ENCODE measurements at regions of chr16 and their contacts with region 1.

Region 1: DNA sequence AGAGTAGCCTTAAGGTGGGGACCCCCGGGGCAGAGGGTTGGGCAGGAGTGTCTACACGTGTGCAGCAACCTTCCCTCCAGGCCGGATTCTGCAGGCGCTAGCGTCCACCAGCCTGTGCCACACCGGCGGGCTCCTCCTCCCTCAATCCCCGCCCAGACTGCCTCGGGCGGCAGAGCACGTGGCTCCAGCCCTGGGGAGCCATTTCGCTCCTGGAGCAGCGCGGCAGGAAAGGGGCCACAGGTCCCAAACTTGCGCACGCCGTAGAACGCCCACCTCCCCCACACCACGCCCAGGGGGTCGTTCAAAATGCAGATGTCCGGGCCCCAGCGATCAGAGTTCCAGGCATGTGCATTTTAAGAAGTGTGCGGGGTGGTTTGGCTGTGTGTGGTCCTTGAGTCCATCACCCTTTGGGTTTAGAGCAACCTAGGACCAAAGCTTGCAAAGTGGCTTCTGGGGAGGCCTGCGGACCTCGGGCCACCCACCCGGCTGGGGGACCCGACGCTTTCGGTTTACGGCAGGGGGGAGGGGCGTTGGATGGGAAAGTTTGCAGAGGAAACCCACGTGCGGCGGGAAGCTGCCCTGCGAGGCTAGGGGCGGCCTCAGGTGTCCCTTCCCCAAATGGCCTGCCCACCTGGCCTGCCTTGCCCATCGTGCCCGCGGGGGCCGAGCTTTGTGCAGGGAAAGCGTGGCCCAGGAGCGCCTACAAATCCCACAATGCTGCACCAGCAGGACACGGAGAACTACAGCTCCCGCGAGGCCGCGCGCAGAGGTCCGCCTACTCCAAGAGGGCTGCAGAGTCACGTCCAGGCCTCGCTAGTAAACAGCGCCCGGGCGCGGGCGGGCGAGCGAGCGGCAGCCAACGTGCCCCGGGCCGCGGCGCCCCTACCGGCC is 1.4 kb downstream of the TFAP4 start:
- DNase-seq: peak; percentile 94 to 96
- H3K4me3 ChIP-seq: peak overlapping the region; percentile 72
- H3K4me3 Mint-ChIP-seq: peak overlapping the region; percentile 88
- H3K27ac Mint-ChIP-seq: peak overlapping the region; percentile 90
- H3K4me1 ChIP-seq: peaks cover 6% of the 10 kb centered on the region
- H3K4me1 Mint-ChIP-seq: no peaks in the 10 kb centered on the region
- H3K27me3 ChIP-seq: no peaks in the 10 kb centered on the region
- H3K27me3 Mint-ChIP-seq: no peaks in the 10 kb centered on the region
- CTCF ChIP-seq: no peak

Region 2: GRCh38 chr16:3577302-3577752 is 694.1 kb before region 1 on chr16 and contains the start of gene NLRC3:
- CTCF ChIA-PET with region 1: no interaction called
- POLR2A ChIA-PET with region 1: no interaction called
- intact Hi-C with region 1: no loop called
- DNase-seq: no peak
- H3K4me3 ChIP-seq: no peak within 1 kb of the TSS
- H3K4me3 Mint-ChIP-seq: no peak within 1 kb of the TSS
- H3K27ac Mint-ChIP-seq: no peak within 1 kb of the TSS
- H3K4me1 ChIP-seq: no peaks in the 10 kb centered on the region
- H3K4me1 Mint-ChIP-seq: no peaks in the 10 kb centered on the region
- H3K27me3 ChIP-seq: no peaks in the 10 kb centered on the region
- H3K27me3 Mint-ChIP-seq: no peaks in the 10 kb centered on the region
- CTCF ChIP-seq: no peak
- total RNA-seq, gene NLRC3: not detected in 2 replicates

Region 3: GRCh38 chr16:4253394-4254150 is 17.8 kb before region 1 on chr16:
- CTCF ChIA-PET with region 1: interaction called, 26 read pairs
- POLR2A ChIA-PET with region 1: interaction called, 51 read pairs
- intact Hi-C with region 1: loop called (anchors 1 kb)
- DNase-seq: peak; percentile 98 to 99
- H3K4me3 ChIP-seq: peak overlapping the region; percentile 56
- H3K4me3 Mint-ChIP-seq: peak overlapping the region; percentile 90
- H3K27ac Mint-ChIP-seq: peak overlapping the region; percentile 96
- H3K4me1 ChIP-seq: no peaks in the 10 kb centered on the region
- H3K4me1 Mint-ChIP-seq: no peaks in the 10 kb centered on the region
- H3K27me3 ChIP-seq: no peaks in the 10 kb centered on the region
- H3K27me3 Mint-ChIP-seq: no peaks in the 10 kb centered on the region
- CTCF ChIP-seq: no peak

Region 4: GRCh38 chr16:4307215-4308037 is 36.0 kb after region 1 on chr16:
- CTCF ChIA-PET with region 1: interaction called, 6 read pairs
- POLR2A ChIA-PET with region 1: interaction called, 4 read pairs
- intact Hi-C with region 1: loop called (anchors 2 kb)
- DNase-seq: peak; percentile 97 to 98
- H3K4me3 ChIP-seq: peak overlapping the region; percentile 78
- H3K4me3 Mint-ChIP-seq: peak overlapping the region; percentile 84
- H3K27ac Mint-ChIP-seq: peak overlapping the region; percentile 84
- H3K4me1 ChIP-seq: peaks cover 14% of the 10 kb centered on the region
- H3K4me1 Mint-ChIP-seq: peaks cover 6% of the 10 kb centered on the region
- H3K27me3 ChIP-seq: no peaks in the 10 kb centered on the region
- H3K27me3 Mint-ChIP-seq: no peaks in the 10 kb centered on the region
- CTCF ChIP-seq: no peak

Region 5: GRCh38 chr16:4330277-4330874 is 59.0 kb after region 1 on chr16:
- CTCF ChIA-PET with region 1: interaction called, 3 read pairs
- POLR2A ChIA-PET with region 1: no interaction called
- intact Hi-C with region 1: loop called (anchors 5 kb)
- DNase-seq: peak; percentile 65 to 88
- H3K4me3 ChIP-seq: no peak overlapping the region
- H3K4me3 Mint-ChIP-seq: no peak overlapping the region
- H3K27ac Mint-ChIP-seq: no peak overlapping the region
- H3K4me1 ChIP-seq: no peaks in the 10 kb centered on the region
- H3K4me1 Mint-ChIP-seq: no peaks in the 10 kb centered on the region
- H3K27me3 ChIP-seq: no peaks in the 10 kb centered on the region
- H3K27me3 Mint-ChIP-seq: no peaks in the 10 kb centered on the region
- CTCF ChIP-seq: peak; percentile 84 to 97

Region 6: DNA sequence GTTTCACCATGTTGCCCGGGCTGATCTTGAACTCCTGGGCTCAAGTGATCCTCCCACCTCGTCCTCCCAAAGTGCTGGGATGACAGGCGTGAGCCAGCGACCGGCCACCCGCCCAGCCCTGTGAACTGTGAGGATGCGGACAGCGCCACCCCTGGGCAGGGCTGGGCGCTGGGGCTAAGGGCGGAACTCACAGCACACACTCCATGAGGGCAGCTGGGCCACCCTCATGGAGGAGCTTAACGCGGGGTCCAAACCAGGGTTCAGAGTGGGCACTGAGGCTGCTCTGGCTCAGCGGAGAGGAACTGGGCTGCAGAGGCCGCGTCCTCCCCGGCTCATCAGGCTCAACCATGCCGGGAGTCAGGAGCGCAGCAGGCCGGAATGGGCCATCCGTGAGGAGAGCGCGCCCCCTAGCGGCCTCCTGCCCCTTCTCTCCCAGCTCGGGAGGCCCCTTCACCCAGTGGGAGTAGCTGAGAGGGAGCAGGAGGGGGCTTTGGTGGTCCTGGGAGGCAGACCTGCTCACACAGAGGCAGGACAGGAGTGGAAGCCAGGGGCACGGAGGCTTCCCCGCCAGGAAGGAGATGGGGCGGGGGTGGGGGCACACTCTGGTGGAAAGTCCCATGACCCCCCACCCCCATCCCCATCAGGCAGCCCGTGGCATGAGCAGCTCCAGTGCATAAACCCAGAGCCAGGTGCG is 131.2 kb after region 1 on chr16:
- CTCF ChIA-PET with region 1: interaction called, 4 read pairs
- POLR2A ChIA-PET with region 1: no interaction called
- intact Hi-C with region 1: loop called (anchors 5 kb)
- DNase-seq: peak; percentile 68 to 85
- H3K4me3 ChIP-seq: no peak overlapping the region
- H3K4me3 Mint-ChIP-seq: no peak overlapping the region
- H3K27ac Mint-ChIP-seq: no peak overlapping the region
- H3K4me1 ChIP-seq: no peaks in the 10 kb centered on the region
- H3K4me1 Mint-ChIP-seq: no peaks in the 10 kb centered on the region
- H3K27me3 ChIP-seq: no peaks in the 10 kb centered on the region
- H3K27me3 Mint-ChIP-seq: no peaks in the 10 kb centered on the region
- CTCF ChIP-seq: peak; percentile 84 to 87

Region 7: GRCh38 chr16:4450926-4451619 is 179.7 kb after region 1 on chr16:
- CTCF ChIA-PET with region 1: no interaction called
- POLR2A ChIA-PET with region 1: no interaction called
- intact Hi-C with region 1: no loop called
- DNase-seq: no peak
- H3K4me3 ChIP-seq: no peak overlapping the region
- H3K4me3 Mint-ChIP-seq: no peak overlapping the region
- H3K27ac Mint-ChIP-seq: no peak overlapping the region
- H3K4me1 ChIP-seq: no peaks in the 10 kb centered on the region
- H3K4me1 Mint-ChIP-seq: no peaks in the 10 kb centered on the region
- H3K27me3 ChIP-seq: no peaks in the 10 kb centered on the region
- H3K27me3 Mint-ChIP-seq: no peaks in the 10 kb centered on the region
- CTCF ChIP-seq: no peak

Measured in Caco-2 (cell line).